Natural killer cell (primary cell): ENCODE measurements at regions of chr1 and their contacts with region 1.

Region 1: DNA sequence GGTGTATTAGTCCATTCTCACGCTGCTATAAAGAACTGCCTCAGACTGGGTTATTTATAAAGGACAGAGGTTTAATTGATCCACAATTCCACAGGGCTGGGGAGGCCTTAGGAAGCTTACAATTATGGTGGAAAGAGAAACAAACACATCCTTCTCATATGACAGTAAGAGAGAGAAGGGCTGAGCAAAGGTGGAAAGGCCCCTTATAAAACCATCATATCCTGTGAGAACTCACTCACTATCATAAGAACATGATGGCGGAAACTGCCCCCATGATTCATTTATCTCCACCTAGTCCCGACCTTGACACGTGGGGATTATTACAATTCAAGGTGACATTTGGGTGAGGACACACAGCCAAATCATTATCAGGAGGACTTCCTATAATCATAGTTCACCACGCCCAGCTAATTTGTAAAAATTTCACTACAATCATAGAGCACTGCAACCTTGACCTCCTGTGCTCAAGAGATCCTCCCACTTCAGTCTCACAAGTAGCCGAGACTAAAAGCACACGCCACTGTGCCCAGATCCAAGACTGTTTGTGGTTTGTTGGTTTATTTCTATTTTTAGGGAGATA is 164.9 kb downstream of the RERE start:
- DNase-seq: peak; percentile 44 to 48
- ATAC-seq: peak in 2 of 3 donors; percentile 84 to 92
- H3K4me3 ChIP-seq: no peak overlapping the region
- H3K4me3 Mint-ChIP-seq: peak overlapping the region; percentile 80
- H3K27ac ChIP-seq: no peak overlapping the region
- H3K27ac Mint-ChIP-seq: peak overlapping the region; percentile 98 to 99
- H3K4me1 ChIP-seq: peaks cover 21% of the 10 kb centered on the region
- H3K4me1 Mint-ChIP-seq: peaks cover 29 to 31% of the 10 kb centered on the region in 2 donors
- H3K27me3 ChIP-seq: no peaks in the 10 kb centered on the region
- H3K27me3 Mint-ChIP-seq: no peaks in the 10 kb centered on the region
- CTCF ChIP-seq: no peak

Region 2: GRCh38 chr1:8687039-8687438 is 34.5 kb after region 1 on chr1:
- intact Hi-C with region 1: no loop called
- DNase-seq: no peak
- ATAC-seq: peak in 1 of 3 donors; percentile 49
- H3K4me3 ChIP-seq: no peak overlapping the region
- H3K4me3 Mint-ChIP-seq: no peak overlapping the region
- H3K27ac ChIP-seq: no peak overlapping the region
- H3K27ac Mint-ChIP-seq: no peak overlapping the region
- H3K4me1 ChIP-seq: peaks cover 3% of the 10 kb centered on the region
- H3K4me1 Mint-ChIP-seq: peaks cover 23 to 34% of the 10 kb centered on the region in 2 donors
- H3K27me3 ChIP-seq: no peaks in the 10 kb centered on the region
- H3K27me3 Mint-ChIP-seq: no peaks in the 10 kb centered on the region
- CTCF ChIP-seq: no peak

Region 3: GRCh38 chr1:8702850-8703810 is 50.6 kb after region 1 on chr1:
- intact Hi-C with region 1: loop called (anchors 1 kb)
- DNase-seq: peak; percentile 68 to 75
- ATAC-seq: peak; percentile 70 to 86 (median 77)
- H3K4me3 ChIP-seq: peak overlapping the region; percentile 39
- H3K4me3 Mint-ChIP-seq: peak overlapping the region; percentile 93
- H3K27ac ChIP-seq: no peak overlapping the region
- H3K27ac Mint-ChIP-seq: peak overlapping the region; percentile 81 to 90
- H3K4me1 ChIP-seq: peaks cover 22% of the 10 kb centered on the region
- H3K4me1 Mint-ChIP-seq: peaks cover 34 to 38% of the 10 kb centered on the region in 2 donors
- H3K27me3 ChIP-seq: peaks cover 4% of the 10 kb centered on the region
- H3K27me3 Mint-ChIP-seq: no peaks in the 10 kb centered on the region
- CTCF ChIP-seq: no peak